BJ (cell line): ENCODE measurements at regions of chr1 and their contacts with region 1.

Region 1: GRCh38 chr1:180563026-180563827 is 4.5 kb downstream of the OVAAL start:
- DNase-seq: no peak
- H3K4me3 ChIP-seq: no peak overlapping the region
- H3K27me3 ChIP-seq: no peaks in the 10 kb centered on the region
- CTCF ChIP-seq: no peak

Region 2: GRCh38 chr1:180515864-180516388 is 47.3 kb before region 1 on chr1:
- CTCF ChIA-PET with region 1: no interaction called
- POLR2A ChIA-PET with region 1: no interaction called
- DNase-seq: peak; percentile 41
- H3K4me3 ChIP-seq: no peak overlapping the region
- H3K27me3 ChIP-seq: no peaks in the 10 kb centered on the region
- CTCF ChIP-seq: peak; percentile 77

Region 3: DNA sequence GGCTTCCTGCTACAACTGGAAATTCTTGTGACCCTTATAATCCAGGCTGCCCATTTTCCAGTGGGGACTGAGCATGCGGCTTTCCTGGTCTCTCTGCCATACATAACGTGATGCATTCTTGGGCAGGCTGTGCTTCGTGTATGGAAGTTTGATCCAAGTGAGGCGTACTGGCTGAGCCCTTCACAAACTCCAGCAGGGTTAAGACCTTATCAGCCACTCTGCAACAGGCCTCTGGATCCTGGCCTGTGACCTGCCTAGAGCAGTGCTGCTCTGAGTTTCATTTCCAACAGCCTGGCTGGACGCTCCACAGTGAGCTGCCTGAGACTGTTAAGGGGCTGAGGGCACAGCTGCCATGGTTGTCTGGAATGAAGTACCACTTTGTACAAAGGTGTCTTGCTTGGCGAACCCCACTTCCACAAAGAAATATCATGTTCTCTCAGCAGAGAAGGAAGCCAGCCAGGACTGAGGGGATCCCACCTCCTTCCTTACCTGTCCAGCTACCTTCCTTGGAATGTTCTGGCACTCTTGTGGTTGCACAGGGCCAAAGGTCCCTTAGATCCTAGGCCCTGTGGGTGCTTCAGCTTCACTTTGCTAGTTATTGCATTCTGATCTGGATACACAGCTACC is 40.1 kb after region 1 on chr1:
- CTCF ChIA-PET with region 1: no interaction called
- POLR2A ChIA-PET with region 1: interaction called, 17 read pairs
- DNase-seq: no peak
- H3K4me3 ChIP-seq: no peak overlapping the region
- H3K27me3 ChIP-seq: no peaks in the 10 kb centered on the region; the same call in 1 of the 2 replicates
- CTCF ChIP-seq: no peak